Calu3 (cell line): ENCODE measurements at regions of chr17 and their contacts with region 1.

Region 1: DNA sequence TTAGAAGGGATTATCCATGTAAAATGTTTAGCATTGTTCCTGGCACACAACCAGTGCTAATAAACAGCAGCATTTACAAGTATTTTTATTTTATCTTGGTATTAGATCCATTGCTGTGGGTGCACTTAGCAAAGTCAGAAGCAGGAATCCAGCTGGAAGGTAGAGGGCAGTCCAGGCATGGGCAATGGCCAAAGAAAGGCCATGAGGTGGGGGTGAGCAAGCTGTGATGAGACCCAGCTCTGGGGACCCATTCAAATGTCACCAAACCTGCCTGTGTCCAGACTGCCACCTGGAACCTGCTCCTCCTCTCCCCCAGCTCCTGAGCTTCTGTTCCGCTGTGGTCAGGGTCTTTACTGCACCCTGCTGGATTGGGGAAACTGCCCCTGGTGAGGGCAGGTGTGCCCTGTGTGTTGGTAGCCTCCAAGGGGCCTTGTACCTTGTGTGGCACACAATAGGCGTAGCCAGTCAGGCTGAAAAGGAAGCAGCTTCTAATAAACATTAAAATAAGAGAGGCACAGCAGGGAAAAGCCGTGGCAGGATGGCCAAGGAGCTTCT is 118.0 kb upstream of the CRHR1 start:
- DNase-seq: no peak
- H3K4me3 Mint-ChIP-seq: no peak overlapping the region
- H3K27ac Mint-ChIP-seq: no peak overlapping the region
- H3K4me1 Mint-ChIP-seq: no peaks in the 10 kb centered on the region
- H3K27me3 Mint-ChIP-seq: peaks cover 86% of the 10 kb centered on the region
- CTCF ChIP-seq: peak; percentile 28

Region 2: DNA sequence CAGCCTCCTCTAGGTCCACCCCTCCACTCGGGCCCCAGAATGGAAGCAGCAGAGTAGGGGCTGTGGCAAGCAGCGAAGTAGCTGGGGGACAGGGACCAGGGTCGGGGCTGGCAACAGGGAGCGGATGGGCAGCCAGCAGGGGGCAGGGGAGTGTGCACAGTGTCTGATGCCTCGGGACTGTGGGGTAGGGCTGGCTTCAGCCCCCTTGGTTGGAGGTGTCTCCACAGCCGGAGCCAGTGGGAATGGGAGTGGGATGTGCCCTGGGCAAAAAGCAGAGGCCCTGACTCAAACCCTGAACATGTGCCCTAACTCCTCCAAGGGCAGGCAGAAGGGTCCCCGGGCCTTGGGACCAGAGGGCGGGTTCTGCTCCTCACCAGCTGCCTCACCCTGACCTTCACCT is 215.0 kb before region 1 on chr17:
- CTCF ChIA-PET with region 1: no interaction called
- intact Hi-C with region 1: no loop called
- DNase-seq: no peak
- H3K4me3 Mint-ChIP-seq: no peak overlapping the region
- H3K27ac Mint-ChIP-seq: no peak overlapping the region
- H3K4me1 Mint-ChIP-seq: peaks cover 28% of the 10 kb centered on the region
- H3K27me3 Mint-ChIP-seq: no peaks in the 10 kb centered on the region
- CTCF ChIP-seq: no peak

Region 3: DNA sequence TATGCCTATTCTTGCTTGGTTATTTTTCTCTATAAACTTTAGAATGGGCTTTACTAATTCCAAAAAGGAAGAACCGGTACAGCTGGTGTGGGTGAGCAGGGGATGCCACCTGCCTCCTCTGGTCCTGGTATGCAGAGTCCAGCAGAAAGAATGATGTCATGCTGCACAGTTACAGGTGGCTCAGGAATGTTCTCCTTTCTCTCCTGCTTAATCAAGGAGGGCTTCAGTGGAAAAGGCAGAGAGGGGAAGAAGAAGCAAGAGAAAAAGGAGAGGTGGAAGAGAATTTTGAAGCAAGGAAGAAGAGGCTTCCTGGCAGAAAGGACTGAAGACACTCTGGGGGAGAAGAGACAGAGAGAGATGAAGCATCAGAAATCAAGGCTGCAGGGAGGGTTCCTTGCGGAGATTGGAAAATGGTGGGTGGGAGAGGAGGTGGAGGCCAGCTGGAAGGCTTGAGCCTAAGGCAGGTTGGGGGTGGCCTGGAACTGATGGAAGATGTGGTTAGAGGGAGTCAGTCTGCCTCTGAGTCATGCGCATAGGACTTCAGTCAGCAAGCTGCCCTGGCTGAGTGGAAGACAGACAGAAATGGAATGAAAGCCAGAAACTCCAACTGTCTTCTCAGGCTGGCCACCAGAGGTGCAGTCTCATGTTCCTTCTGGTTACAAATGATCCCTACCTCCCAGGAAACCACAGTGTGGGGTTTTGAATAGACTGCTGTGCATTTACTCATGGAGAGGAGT is 53.4 kb after region 1 on chr17:
- CTCF ChIA-PET with region 1: no interaction called
- intact Hi-C with region 1: no loop called
- DNase-seq: peak; percentile 68
- H3K4me3 Mint-ChIP-seq: no peak overlapping the region
- H3K27ac Mint-ChIP-seq: no peak overlapping the region
- H3K4me1 Mint-ChIP-seq: peaks cover 14% of the 10 kb centered on the region
- H3K27me3 Mint-ChIP-seq: peaks cover 45% of the 10 kb centered on the region
- CTCF ChIP-seq: peak; percentile 61

Region 4: GRCh38 chr17:45828628-45829027 is 162.5 kb after region 1 on chr17:
- CTCF ChIA-PET with region 1: interaction called, 12 read pairs
- intact Hi-C with region 1: no loop called
- DNase-seq: no peak
- H3K4me3 Mint-ChIP-seq: no peak overlapping the region
- H3K27ac Mint-ChIP-seq: no peak overlapping the region
- H3K4me1 Mint-ChIP-seq: no peaks in the 10 kb centered on the region
- H3K27me3 Mint-ChIP-seq: peaks cover 91% of the 10 kb centered on the region
- CTCF ChIP-seq: no peak